ENCODE measurements at regions of chr11 and their contacts with region 1.

Region 1: GRCh38 chr11:59380263-59381059 is 21.8 kb downstream of the OR5AN1 start:
- DNase-seq: peak; percentile 55
- ATAC-seq: peak; percentile 57
- H3K4me3 ChIP-seq: peak overlapping the region in 3 of 5 experiments; percentile 24 to 58 (median 31)
- H3K4me3 Mint-ChIP-seq: peak overlapping the region; percentile 18
- H3K27ac ChIP-seq: peak overlapping the region in 1 of 2 donors; percentile 42
- H3K27ac Mint-ChIP-seq: peak overlapping the region; percentile 32
- H3K4me1 ChIP-seq: peaks cover 6 to 15% of the 10 kb centered on the region in 2 donors
- H3K4me1 Mint-ChIP-seq: peaks cover 17% of the 10 kb centered on the region
- H3K27me3 ChIP-seq: no peaks in the 10 kb centered on the region
- H3K27me3 Mint-ChIP-seq: no peaks in the 10 kb centered on the region
- CTCF ChIP-seq: no peak

Region 2: GRCh38 chr11:59273373-59273841 is 107.1 kb before region 1 on chr11:
- CTCF ChIA-PET with region 1: no interaction called
- POLR2A ChIA-PET with region 1: no interaction called
- intact Hi-C with region 1: loop called (anchors 1 kb)
- DNase-seq: peak; percentile 88
- ATAC-seq: peak; percentile 85
- H3K4me3 ChIP-seq: peak overlapping the region in 1 of 5 experiments; percentile 44
- H3K4me3 Mint-ChIP-seq: peak overlapping the region; percentile 83
- H3K27ac ChIP-seq: peak overlapping the region; percentile 90 to 94
- H3K27ac Mint-ChIP-seq: peak overlapping the region; percentile 95
- H3K4me1 ChIP-seq: peaks cover 76 to 85% of the 10 kb centered on the region in 2 donors
- H3K4me1 Mint-ChIP-seq: peaks cover 92% of the 10 kb centered on the region
- H3K27me3 ChIP-seq: no peaks in the 10 kb centered on the region
- H3K27me3 Mint-ChIP-seq: no peaks in the 10 kb centered on the region
- CTCF ChIP-seq: no peak

Region 3: GRCh38 chr11:59283825-59284772 is 96.4 kb before region 1 on chr11:
- CTCF ChIA-PET with region 1: no interaction called
- POLR2A ChIA-PET with region 1: no interaction called
- intact Hi-C with region 1: loop called (anchors 1 kb)
- DNase-seq: peak; percentile 92
- ATAC-seq: peak; percentile 83
- H3K4me3 ChIP-seq: peak overlapping the region in 4 of 5 experiments; percentile 25 to 49 (median 34)
- H3K4me3 Mint-ChIP-seq: peak overlapping the region; percentile 80
- H3K27ac ChIP-seq: peak overlapping the region; percentile 75 to 89
- H3K27ac Mint-ChIP-seq: peak overlapping the region; percentile 91
- H3K4me1 ChIP-seq: peaks cover 30 to 51% of the 10 kb centered on the region in 2 donors
- H3K4me1 Mint-ChIP-seq: peaks cover 63% of the 10 kb centered on the region
- H3K27me3 ChIP-seq: no peaks in the 10 kb centered on the region
- H3K27me3 Mint-ChIP-seq: no peaks in the 10 kb centered on the region
- CTCF ChIP-seq: peak; percentile 89

Region 4: DNA sequence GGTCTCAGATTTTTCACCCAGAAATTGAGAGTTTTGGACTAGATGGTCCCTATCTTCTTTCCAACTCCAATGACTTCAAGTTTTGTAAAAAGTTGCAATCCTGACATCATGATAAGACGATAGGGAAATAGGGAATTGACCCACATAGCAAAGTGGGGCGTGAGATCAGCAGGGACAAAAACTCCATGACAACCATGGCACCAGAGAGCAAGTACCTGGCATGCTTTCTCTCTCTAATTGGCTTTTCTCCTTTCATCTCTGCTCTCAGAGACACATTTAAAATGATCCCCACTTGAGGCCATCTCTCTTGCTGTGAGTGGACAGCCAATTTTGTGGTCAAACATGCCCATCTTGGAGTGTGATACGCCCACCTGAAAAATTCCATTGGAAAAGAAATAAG is 21.9 kb before region 1 on chr11 and contains the start of gene OR5AN1:
- CTCF ChIA-PET with region 1: no interaction called
- POLR2A ChIA-PET with region 1: no interaction called
- intact Hi-C with region 1: no loop called
- DNase-seq: no peak
- ATAC-seq: no peak
- H3K4me3 ChIP-seq: no peak within 1 kb of the TSS
- H3K4me3 Mint-ChIP-seq: no peak within 1 kb of the TSS
- H3K27ac ChIP-seq: no peak within 1 kb of the TSS
- H3K27ac Mint-ChIP-seq: no peak within 1 kb of the TSS
- H3K4me1 ChIP-seq: no peaks in the 10 kb centered on the region
- H3K4me1 Mint-ChIP-seq: no peaks in the 10 kb centered on the region
- H3K27me3 ChIP-seq: peaks cover 0 to 5% (median 2%) of the 10 kb centered on the region in 4 experiments
- H3K27me3 Mint-ChIP-seq: peaks cover 14% of the 10 kb centered on the region
- CTCF ChIP-seq: no peak
- total RNA-seq, gene OR5AN1: 0.12 TPM in 1 of 2 replicates, not detected in the other

Region 5: GRCh38 chr11:59417023-59417422 is 36.6 kb after region 1 on chr11:
- CTCF ChIA-PET with region 1: no interaction called
- POLR2A ChIA-PET with region 1: no interaction called
- intact Hi-C with region 1: loop called (anchors 5 kb)
- DNase-seq: peak; percentile 46
- ATAC-seq: peak; percentile 67
- H3K4me3 ChIP-seq: peak overlapping the region in 2 of 5 experiments; percentile 25 to 31
- H3K4me3 Mint-ChIP-seq: peak overlapping the region; percentile 68
- H3K27ac ChIP-seq: peak overlapping the region; percentile 16 to 62
- H3K27ac Mint-ChIP-seq: peak overlapping the region; percentile 81
- H3K4me1 ChIP-seq: peaks cover 44% of the 10 kb centered on the region in 2 donors
- H3K4me1 Mint-ChIP-seq: peaks cover 38% of the 10 kb centered on the region
- H3K27me3 ChIP-seq: no peaks in the 10 kb centered on the region
- H3K27me3 Mint-ChIP-seq: no peaks in the 10 kb centered on the region
- CTCF ChIP-seq: no peak

Measured in B cell (primary cell).